ENCODE measurements at regions of chr14 and their contacts with region 1.

Region 1: DNA sequence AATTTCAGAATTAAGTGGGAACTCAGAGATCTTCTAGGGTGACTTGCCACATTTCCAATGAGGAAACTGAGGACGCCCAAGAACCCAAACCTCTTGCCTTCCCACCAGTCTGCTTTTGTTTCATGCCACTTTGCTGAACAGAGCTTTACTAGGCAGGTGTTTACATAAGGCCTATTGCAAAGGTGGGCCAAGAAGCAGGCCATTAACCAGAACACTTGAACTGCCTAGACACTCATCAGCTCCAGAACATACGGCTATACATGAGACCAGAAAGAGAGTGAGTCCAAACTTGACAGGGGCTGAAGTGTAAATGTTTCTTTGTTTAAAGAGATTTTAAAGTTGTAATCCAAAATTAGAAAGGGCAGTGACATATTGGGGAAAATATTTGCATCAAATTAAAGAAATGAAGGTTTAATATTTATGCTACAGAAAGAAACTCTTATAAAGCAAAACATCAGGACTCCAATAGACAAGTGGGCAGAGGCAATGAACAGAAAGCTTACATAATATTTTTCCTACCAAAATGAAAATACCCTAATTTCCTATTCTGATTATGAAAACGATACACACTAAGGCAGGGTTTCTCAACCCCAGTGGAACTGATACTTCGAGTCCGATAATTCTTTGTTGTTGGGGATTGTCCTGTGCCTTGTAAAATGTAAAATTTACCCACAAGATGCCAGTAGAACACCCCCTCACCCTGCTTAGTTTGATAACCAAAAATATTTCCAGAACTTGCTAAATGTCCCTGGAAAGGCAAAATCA is 11.7 kb downstream of the BATF start:
- DNase-seq: no peak
- H3K4me3 ChIP-seq: no peak overlapping the region
- H3K4me3 Mint-ChIP-seq: no peak overlapping the region
- H3K27ac Mint-ChIP-seq: no peak overlapping the region
- H3K4me1 ChIP-seq: peaks cover 13% of the 10 kb centered on the region
- H3K4me1 Mint-ChIP-seq: peaks cover 25% of the 10 kb centered on the region
- H3K27me3 ChIP-seq: no peaks in the 10 kb centered on the region
- H3K27me3 Mint-ChIP-seq: no peaks in the 10 kb centered on the region
- CTCF ChIP-seq: no peak

Region 2: GRCh38 chr14:75258615-75259466 is 275.1 kb before region 1 on chr14:
- CTCF ChIA-PET with region 1: no interaction called
- POLR2A ChIA-PET with region 1: no interaction called
- intact Hi-C with region 1: no loop called
- DNase-seq: peak; percentile 99
- H3K4me3 ChIP-seq: peak overlapping the region; percentile 57
- H3K4me3 Mint-ChIP-seq: peak overlapping the region; percentile 93
- H3K27ac Mint-ChIP-seq: peak overlapping the region; percentile 100
- H3K4me1 ChIP-seq: peaks cover 12% of the 10 kb centered on the region
- H3K4me1 Mint-ChIP-seq: peaks cover 8% of the 10 kb centered on the region
- H3K27me3 ChIP-seq: no peaks in the 10 kb centered on the region
- H3K27me3 Mint-ChIP-seq: no peaks in the 10 kb centered on the region
- CTCF ChIP-seq: no peak

Region 3: DNA sequence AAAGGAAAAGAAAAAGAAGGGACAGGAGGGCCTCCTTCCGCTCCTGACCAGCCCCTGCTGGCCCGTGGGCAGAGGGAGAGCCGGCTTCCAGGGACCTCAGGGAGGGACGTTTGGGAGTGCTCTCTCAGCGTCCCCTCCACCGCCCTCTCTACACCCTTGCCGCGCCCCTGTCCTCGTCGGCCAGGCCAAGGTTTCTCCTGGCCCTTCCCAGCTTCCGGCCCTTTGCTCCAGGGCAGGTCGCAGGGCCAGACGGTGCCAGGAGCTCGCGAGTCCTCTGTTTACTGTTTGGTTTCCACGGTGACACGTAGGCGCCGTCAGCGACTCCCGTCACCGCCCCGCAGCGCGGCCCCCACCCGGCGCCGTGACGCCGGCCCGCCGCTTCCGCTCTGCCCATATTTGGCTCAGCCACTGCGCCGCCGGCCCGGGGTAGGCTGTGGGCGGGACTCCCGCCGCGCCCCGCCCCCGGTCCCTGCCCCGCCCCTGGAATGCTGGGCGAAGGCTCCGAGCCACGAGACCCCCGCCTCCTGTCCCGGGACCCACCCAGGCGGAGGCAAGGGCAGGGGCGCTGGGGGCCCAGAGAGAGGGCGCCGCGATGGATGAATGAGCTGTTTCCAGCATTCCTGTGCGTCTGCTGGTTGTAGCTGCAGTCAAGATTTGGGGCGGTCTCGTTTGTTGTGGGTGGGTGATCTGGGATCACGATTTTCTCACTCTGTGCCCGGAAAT is 239.9 kb before region 1 on chr14:
- CTCF ChIA-PET with region 1: no interaction called
- POLR2A ChIA-PET with region 1: no interaction called
- intact Hi-C with region 1: no loop called
- DNase-seq: peak; percentile 98
- H3K4me3 ChIP-seq: peak overlapping the region; percentile 40
- H3K4me3 Mint-ChIP-seq: peak overlapping the region; percentile 71
- H3K27ac Mint-ChIP-seq: peak overlapping the region; percentile 86
- H3K4me1 ChIP-seq: peaks cover 18% of the 10 kb centered on the region
- H3K4me1 Mint-ChIP-seq: peaks cover 6% of the 10 kb centered on the region
- H3K27me3 ChIP-seq: no peaks in the 10 kb centered on the region
- H3K27me3 Mint-ChIP-seq: no peaks in the 10 kb centered on the region
- CTCF ChIP-seq: peak in 1 of 2 experiments; percentile 14

Region 4: GRCh38 chr14:75399821-75400678 is 133.9 kb before region 1 on chr14:
- CTCF ChIA-PET with region 1: no interaction called
- POLR2A ChIA-PET with region 1: no interaction called
- intact Hi-C with region 1: no loop called
- DNase-seq: no peak
- H3K4me3 ChIP-seq: no peak overlapping the region
- H3K4me3 Mint-ChIP-seq: no peak overlapping the region
- H3K27ac Mint-ChIP-seq: no peak overlapping the region
- H3K4me1 ChIP-seq: no peaks in the 10 kb centered on the region
- H3K4me1 Mint-ChIP-seq: no peaks in the 10 kb centered on the region
- H3K27me3 ChIP-seq: no peaks in the 10 kb centered on the region
- H3K27me3 Mint-ChIP-seq: no peaks in the 10 kb centered on the region
- CTCF ChIP-seq: no peak

Region 5: DNA sequence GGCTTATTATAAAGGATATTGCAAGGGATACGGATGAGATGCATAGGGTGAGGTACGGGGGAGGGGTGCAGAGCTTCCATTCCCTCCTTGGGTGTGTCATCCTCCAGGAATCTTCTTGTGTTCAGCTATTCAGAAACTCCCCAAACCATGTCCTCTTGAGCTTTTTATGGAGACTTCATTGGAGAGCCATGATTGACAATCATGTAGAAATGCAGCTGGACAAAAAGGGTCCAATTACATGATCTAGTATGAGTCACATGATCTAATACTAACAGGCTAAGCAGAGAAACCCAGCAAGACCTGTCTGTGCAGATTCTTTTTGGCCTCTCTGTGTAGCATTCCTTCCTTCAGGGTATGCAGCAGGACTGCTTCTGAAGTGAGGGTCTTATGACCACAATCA is 20.5 kb after region 1 on chr14:
- CTCF ChIA-PET with region 1: no interaction called
- POLR2A ChIA-PET with region 1: interaction called, 12 read pairs
- intact Hi-C with region 1: no loop called
- DNase-seq: peak; percentile 72 to 80
- H3K4me3 ChIP-seq: no peak overlapping the region
- H3K4me3 Mint-ChIP-seq: peak overlapping the region; percentile 62
- H3K27ac Mint-ChIP-seq: peak overlapping the region; percentile 90
- H3K4me1 ChIP-seq: peaks cover 45% of the 10 kb centered on the region
- H3K4me1 Mint-ChIP-seq: peaks cover 42% of the 10 kb centered on the region
- H3K27me3 ChIP-seq: no peaks in the 10 kb centered on the region
- H3K27me3 Mint-ChIP-seq: no peaks in the 10 kb centered on the region
- CTCF ChIP-seq: no peak

Region 6: DNA sequence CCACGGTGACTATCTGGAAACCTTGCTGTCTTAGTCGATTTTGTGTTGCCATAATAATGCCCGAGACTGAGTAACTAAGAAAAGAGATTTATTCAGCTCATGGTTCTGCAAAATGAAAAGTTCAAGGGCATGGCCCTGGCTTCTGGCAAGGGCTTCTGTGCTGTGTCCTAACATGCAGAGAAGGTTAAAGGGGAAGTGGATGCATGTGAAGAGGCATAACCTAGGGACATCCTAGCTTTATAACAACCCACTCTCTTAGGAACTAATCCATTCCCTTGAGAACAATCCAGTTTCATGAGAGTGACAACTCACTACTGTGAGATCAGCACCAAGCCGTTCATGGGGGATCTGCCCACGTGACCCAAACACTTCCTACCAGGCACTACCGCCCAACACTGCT is 56.0 kb after region 1 on chr14:
- CTCF ChIA-PET with region 1: no interaction called
- POLR2A ChIA-PET with region 1: no interaction called
- intact Hi-C with region 1: no loop called
- DNase-seq: no peak
- H3K4me3 ChIP-seq: no peak overlapping the region
- H3K4me3 Mint-ChIP-seq: no peak overlapping the region
- H3K27ac Mint-ChIP-seq: no peak overlapping the region
- H3K4me1 ChIP-seq: no peaks in the 10 kb centered on the region; the same call in 1 of the 2 replicates
- H3K4me1 Mint-ChIP-seq: no peaks in the 10 kb centered on the region
- H3K27me3 ChIP-seq: no peaks in the 10 kb centered on the region
- H3K27me3 Mint-ChIP-seq: no peaks in the 10 kb centered on the region
- CTCF ChIP-seq: no peak

Measured in Caco-2 (cell line).